KBM-7 (cell line): ENCODE measurements at regions of chr1 and their contacts with region 1.

Region 1: DNA sequence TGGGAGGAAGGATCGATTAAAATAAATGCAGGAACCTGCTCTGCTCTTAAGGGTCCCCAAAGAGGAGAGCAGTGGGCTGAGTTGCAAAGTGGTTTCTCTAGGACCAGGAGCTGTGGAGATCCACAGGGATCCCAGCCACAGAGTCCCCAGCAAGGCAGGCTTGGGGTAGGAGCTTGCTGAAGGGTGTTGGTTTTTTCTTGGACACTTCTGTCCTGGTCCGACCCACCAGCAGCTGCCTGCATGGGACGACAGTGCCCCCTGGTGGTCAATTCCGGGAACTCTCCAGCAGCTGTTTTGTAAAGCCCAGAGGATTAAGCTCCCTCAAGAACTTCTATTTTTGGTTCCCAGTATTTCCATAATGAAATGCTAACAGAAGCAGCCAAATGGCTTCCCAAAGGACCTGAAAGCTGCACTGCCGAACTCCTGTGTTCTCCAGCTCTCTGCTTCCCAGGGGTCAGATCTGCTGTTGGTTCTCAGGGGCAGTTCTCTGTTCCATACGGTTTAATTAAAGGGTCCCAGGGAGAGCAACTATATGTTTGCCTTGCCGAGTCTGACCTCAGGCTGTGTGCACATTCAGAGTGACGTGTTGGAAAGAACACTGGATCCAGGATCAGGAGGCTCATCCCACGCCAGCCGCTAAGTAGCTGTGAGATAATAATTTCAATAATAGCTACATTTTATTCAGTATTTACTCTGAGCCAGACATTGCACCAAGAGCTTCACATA is 23.2 kb downstream of the NENF start:
- DNase-seq: peak; percentile 85

Region 2: DNA sequence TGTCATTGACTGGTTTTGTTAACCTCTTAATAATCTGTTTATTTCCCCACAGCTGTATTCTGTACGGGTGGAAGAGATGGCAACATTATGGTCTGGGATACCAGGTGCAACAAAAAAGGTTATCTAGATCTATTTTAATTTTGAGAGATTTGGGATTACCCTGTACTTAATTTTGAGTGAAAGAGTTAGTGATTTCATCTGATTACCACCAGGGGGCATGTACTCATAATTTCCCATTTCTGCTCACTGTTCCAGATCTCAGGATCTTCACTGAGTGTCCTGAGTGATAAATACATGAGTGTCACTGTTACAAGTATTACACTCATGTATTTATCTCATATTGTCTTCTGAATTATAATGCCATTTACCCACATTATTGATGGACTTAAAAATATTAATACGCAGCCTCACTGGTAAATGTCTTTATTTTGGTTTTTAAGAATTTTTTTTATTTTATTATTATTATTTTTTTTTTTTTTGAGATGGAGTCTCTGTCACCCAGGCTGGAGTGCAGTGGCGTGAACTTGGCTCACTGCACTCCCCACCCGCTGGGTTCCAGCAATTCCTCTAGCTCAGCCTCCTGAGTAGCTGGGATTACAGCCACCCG is 393.0 kb before region 1 on chr1:
- in situ Hi-C with region 1: loop called (anchors 25 kb)
- DNase-seq: peak; percentile 37

Region 3: DNA sequence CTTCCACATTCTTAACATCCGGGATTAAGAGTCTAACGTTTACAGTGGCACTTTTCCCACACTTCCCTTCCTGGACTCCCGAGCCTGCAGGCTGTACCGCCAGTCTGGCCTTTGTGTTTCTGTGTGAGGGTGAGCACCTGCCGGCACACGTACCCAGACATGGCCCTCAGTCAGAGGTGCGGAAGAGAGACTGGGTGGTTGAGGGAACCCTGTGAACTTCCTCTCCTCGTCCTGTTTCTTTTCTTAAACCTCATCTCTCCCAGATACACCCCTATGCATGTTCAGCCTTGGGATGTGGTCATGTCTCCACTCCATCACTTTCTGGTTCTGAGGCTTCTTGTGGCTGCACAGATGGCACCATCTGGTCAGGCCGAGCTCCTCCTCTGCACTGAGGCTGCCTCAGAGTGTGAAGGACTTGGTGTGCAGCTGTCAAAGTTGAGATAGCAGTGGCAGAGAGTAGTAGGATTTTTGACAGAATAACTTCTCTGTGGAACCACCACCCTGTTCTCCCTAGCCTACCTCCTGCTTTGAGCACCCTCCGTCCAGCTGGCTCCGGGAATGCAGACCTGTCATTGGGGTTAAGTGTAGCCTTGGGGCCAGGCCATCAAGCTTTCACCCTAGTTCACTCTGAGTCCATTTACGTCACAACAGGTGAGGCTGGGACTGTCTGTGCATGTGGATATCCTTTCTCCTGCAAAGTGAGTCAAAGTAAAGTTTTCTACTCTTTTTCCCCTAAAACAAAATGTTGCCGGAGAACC is 525.8 kb after region 1 on chr1:
- in situ Hi-C with region 1: loop called (anchors 25 kb)
- DNase-seq: no peak